Dendritic cell treated with granulocyte-macrophage colony-stimulating factor and Interleukin-4, amounts not matched to agents 40 ng/mL and 50 ng/mL, for 4 days (primary cell): ENCODE measurements at regions of chr22 and their contacts with region 1.

Region 1: DNA sequence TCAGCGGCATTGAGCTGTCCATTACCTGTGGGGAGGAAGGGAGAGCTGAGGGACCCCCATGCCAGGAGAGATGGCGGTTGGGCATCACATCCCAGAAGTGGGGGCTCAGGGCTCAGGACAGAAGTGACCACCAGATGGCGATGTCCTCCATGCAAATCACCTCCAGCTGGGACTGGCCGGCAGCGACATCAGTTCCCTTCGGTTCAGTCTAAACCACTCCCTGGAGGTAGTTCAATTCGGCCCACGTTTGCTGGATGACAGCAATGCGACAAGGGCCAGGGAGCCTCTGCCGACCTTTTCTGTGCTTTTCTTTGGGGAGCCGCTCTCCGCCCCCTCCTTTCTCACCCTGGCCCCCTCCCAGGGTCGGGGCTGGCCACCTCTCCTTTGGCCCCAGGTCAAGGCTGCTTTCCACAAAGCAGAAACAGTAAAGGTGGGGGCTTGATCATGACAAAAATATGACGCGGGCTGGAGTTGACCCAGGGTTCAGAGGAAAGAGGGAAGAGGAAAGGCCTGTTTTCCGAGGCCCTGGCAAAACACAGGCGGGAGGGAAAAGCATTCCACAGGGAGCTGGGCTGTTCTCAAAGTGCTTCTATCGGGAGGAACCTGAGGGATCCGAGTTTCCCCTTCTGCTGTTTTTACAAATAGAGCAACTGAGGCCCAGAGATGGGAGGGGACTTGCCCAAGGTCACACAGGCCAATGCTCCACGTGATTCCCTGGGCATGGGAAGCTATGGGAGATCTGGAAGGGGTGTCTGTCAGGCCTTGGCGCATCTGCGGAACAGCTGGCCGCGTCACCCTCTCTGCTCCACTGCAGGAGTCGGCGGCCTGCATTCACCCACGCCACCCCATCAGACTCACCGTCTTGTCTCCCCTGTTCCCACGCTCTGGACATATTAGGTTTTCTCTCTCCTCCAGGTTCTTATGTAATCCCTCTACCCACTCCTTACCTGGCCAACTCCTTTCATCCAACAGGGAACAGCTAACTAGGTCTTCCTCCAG is 54.7 kb downstream of the FBXO7 start:
- H3K4me3 Mint-ChIP-seq: no peak overlapping the region
- H3K27ac Mint-ChIP-seq: no peak overlapping the region
- H3K4me1 Mint-ChIP-seq: peaks cover 10% of the 10 kb centered on the region
- H3K27me3 Mint-ChIP-seq: peaks cover 9% of the 10 kb centered on the region

Region 2: GRCh38 chr22:32985899-32986765 is 456.8 kb after region 1 on chr22:
- intact Hi-C with region 1: loop called (anchors 2 kb)
- H3K4me3 Mint-ChIP-seq: no peak overlapping the region
- H3K27ac Mint-ChIP-seq: no peak overlapping the region
- H3K4me1 Mint-ChIP-seq: no peaks in the 10 kb centered on the region
- H3K27me3 Mint-ChIP-seq: no peaks in the 10 kb centered on the region

Region 3: GRCh38 chr22:33000342-33001280 is 471.3 kb after region 1 on chr22:
- intact Hi-C with region 1: loop called (anchors 1 kb)
- H3K4me3 Mint-ChIP-seq: no peak overlapping the region
- H3K27ac Mint-ChIP-seq: no peak overlapping the region
- H3K4me1 Mint-ChIP-seq: no peaks in the 10 kb centered on the region
- H3K27me3 Mint-ChIP-seq: peaks cover 2% of the 10 kb centered on the region